Activated CD8-positive, alpha-beta memory T cell treated with anti-CD3 and anti-CD28 coated beads, Interleukin-2, amount 10 ng/mL, durations not matched to agents 7 days and 5 days (primary cell): ENCODE measurements at regions of chr2 and their contacts with region 1.

Region 1: DNA sequence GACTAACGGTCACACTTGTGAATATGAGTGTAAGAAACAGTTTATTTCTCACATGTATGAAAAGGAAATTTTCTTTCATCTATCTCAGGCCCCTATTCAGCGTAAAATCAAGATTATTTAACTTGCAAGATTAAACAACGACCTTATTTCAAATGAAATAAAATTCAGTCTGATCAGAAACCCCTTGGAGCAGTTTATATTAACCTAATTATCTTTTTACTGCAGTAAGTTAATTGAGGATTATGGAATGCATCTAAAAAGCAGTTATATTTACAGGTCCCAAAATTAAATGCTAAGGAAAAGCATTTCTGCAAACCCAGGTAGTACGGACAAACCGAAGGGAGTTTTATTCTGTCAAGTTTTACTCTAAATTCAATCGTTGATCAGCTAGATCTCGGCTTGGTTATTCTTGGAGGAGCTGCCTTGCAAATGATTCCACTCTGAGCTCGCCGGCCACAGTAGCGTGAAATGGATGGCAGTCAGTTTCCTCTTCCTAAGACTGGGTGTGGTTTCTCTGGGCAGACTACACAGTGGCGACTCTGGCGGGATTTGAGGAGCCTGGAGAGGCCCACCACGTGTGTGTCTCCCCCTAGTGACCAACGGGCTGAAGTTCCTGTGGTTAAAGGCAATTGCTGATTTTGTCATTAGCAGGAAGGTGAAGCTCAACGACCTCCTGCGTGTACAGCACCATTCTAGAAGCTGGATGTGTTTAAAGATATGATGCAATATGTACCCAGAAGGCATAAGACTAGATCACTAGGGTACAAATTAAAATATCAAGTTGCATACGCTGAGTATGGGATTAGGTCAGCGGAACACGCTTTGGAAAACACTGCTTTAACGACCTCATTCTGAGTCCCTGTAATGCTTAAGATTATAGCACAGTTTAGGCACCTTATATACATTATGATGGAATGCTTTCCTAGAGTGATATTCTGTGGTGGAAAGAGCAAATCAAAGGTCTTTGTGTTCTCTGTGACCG is 36.4 kb downstream of the PRKRA start:
- DNase-seq: peak; percentile 95
- ATAC-seq: peak; percentile 75
- H3K4me3 Mint-ChIP-seq: peak overlapping the region; percentile 81
- H3K27ac Mint-ChIP-seq: peak overlapping the region; percentile 94
- H3K4me1 Mint-ChIP-seq: peaks cover 70% of the 10 kb centered on the region
- H3K27me3 Mint-ChIP-seq: no peaks in the 10 kb centered on the region

Region 2: GRCh38 chr2:178306352-178307073 is 108.0 kb before region 1 on chr2:
- CTCF ChIA-PET with region 1: interaction called, 17 read pairs
- DNase-seq: peak; percentile 67
- ATAC-seq: peak; percentile 92
- H3K4me3 Mint-ChIP-seq: no peak overlapping the region
- H3K27ac Mint-ChIP-seq: no peak overlapping the region
- H3K4me1 Mint-ChIP-seq: no peaks in the 10 kb centered on the region
- H3K27me3 Mint-ChIP-seq: peaks cover 39% of the 10 kb centered on the region

Region 3: GRCh38 chr2:178397002-178397605 is 17.5 kb before region 1 on chr2:
- CTCF ChIA-PET with region 1: interaction called, 150 read pairs
- DNase-seq: no peak
- ATAC-seq: peak; percentile 89
- H3K4me3 Mint-ChIP-seq: no peak overlapping the region
- H3K27ac Mint-ChIP-seq: no peak overlapping the region
- H3K4me1 Mint-ChIP-seq: peaks cover 16% of the 10 kb centered on the region
- H3K27me3 Mint-ChIP-seq: peaks cover 17% of the 10 kb centered on the region

Region 4: DNA sequence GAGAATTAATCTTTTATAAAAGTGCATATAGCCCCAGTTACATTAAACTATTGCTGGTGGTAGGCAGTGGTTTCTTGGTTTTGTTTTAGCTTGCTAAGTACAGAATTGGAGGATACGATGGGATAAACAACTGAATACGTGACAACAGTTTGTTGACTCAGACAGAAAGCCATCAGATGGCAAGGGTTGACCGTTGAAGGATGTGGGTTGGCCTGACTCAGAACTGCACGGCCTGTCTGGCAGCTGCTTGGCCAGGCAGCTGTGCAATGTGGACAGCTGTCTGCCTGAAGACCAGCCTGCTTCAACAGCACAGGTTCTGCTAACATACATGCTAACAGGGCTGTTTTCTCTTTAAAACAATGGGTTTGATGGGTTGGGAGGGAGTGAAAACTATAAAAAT is 10.2 kb before region 1 on chr2:
- CTCF ChIA-PET with region 1: interaction called, 150 read pairs
- DNase-seq: peak; percentile 93
- ATAC-seq: peak; percentile 93
- H3K4me3 Mint-ChIP-seq: peak overlapping the region; percentile 56
- H3K27ac Mint-ChIP-seq: peak overlapping the region; percentile 86
- H3K4me1 Mint-ChIP-seq: peaks cover 54% of the 10 kb centered on the region
- H3K27me3 Mint-ChIP-seq: peaks cover 2% of the 10 kb centered on the region

Region 5: GRCh38 chr2:178450774-178451525 is 36.4 kb after region 1 on chr2 and contains the starts of genes PJVK and PRKRA:
- CTCF ChIA-PET with region 1: interaction called, 12 read pairs
- DNase-seq: peak; percentile 97
- ATAC-seq: peak; percentile 94
- H3K4me3 Mint-ChIP-seq: peak within 1 kb of the TSS; percentile 89
- H3K27ac Mint-ChIP-seq: peak within 1 kb of the TSS; percentile 89
- H3K4me1 Mint-ChIP-seq: peaks cover 28% of the 10 kb centered on the region
- H3K27me3 Mint-ChIP-seq: peaks cover 2% of the 10 kb centered on the region
- total RNA-seq, gene PJVK: 1.8 to 1.9 TPM
- total RNA-seq, gene PRKRA: 33.5 to 37.5 TPM